ENCODE measurements at regions of chr1 and their contacts with region 1.

Region 1: GRCh38 chr1:107829061-107830040 is 135.6 kb downstream of the VAV3 start:
- DNase-seq: no peak
- ATAC-seq: no peak
- H3K4me3 ChIP-seq: no peak overlapping the region
- H3K27ac ChIP-seq: peak overlapping the region in 2 of 12 donors; percentile 22 to 59
- H3K4me1 ChIP-seq: peaks cover 0 to 50% (median 0%) of the 10 kb centered on the region in 12 donors
- H3K27me3 ChIP-seq: no peaks in the 10 kb centered on the region
- CTCF ChIP-seq: no peak
- POLR2A ChIP-seq: no peak

Region 2: GRCh38 chr1:107782217-107782845 is 47.0 kb before region 1 on chr1:
- intact Hi-C with region 1: loop called in 1 of 10 experiments (anchors 5 kb)
- DNase-seq: peak in 2 of 5 donors; percentile 43
- ATAC-seq: peak in 3 of 4 donors; percentile 36 to 50 (median 49)
- H3K4me3 ChIP-seq: no peak overlapping the region
- H3K27ac ChIP-seq: no peak overlapping the region
- H3K4me1 ChIP-seq: peaks cover 0 to 34% (median 2%) of the 10 kb centered on the region in 12 donors
- H3K27me3 ChIP-seq: no peaks in the 10 kb centered on the region
- CTCF ChIP-seq: peak; percentile 65 to 85 (median 74)
- POLR2A ChIP-seq: no peak

Region 3: GRCh38 chr1:107795994-107796393 is 33.4 kb before region 1 on chr1:
- intact Hi-C with region 1: no loop called
- DNase-seq: peak in 2 of 5 donors; percentile 20 to 29
- ATAC-seq: peak in 3 of 4 donors; percentile 28 to 82 (median 67)
- H3K4me3 ChIP-seq: no peak overlapping the region
- H3K27ac ChIP-seq: no peak overlapping the region
- H3K4me1 ChIP-seq: peaks cover 0 to 7% (median 0%) of the 10 kb centered on the region in 12 donors
- H3K27me3 ChIP-seq: no peaks in the 10 kb centered on the region
- CTCF ChIP-seq: no peak
- POLR2A ChIP-seq: no peak

Region 4: DNA sequence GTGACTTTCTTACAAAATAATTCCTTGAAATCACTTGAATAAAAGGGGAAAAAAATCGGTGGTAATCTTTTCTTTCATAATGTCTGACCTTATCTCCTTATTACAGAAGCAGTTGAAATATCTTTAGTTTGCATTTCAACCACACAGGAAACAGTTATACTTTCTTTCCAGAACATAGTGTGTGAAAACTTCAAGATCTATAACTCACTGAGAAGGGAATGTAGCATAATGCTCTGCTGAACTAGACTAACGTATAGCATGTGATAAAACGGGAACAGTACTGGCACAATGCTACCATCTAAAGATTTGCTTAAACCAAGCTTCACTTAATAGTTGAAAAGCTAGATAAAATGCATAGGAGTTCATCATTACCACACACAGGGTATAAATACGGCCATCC is 90.6 kb after region 1 on chr1:
- intact Hi-C with region 1: loop called in 1 of 10 experiments (anchors 10 kb)
- DNase-seq: no peak
- ATAC-seq: no peak
- H3K4me3 ChIP-seq: no peak overlapping the region
- H3K27ac ChIP-seq: no peak overlapping the region
- H3K4me1 ChIP-seq: peaks cover 0 to 24% (median 0%) of the 10 kb centered on the region in 12 donors
- H3K27me3 ChIP-seq: no peaks in the 10 kb centered on the region
- CTCF ChIP-seq: no peak
- POLR2A ChIP-seq: no peak

Region 5: GRCh38 chr1:107936498-107937481 is 107.4 kb after region 1 on chr1:
- intact Hi-C with region 1: loop called in 1 of 10 experiments (anchors 5 kb)
- DNase-seq: peak in 4 of 5 donors; percentile 33 to 53 (median 38)
- ATAC-seq: peak; percentile 47 to 88 (median 82)
- H3K4me3 ChIP-seq: peak overlapping the region in 1 of 12 donors; percentile 20
- H3K27ac ChIP-seq: peak overlapping the region in 10 of 12 donors; percentile 30 to 70 (median 50)
- H3K4me1 ChIP-seq: peaks cover 0 to 83% (median 12%) of the 10 kb centered on the region in 12 donors
- H3K27me3 ChIP-seq: no peaks in the 10 kb centered on the region
- CTCF ChIP-seq: no peak
- POLR2A ChIP-seq: no peak

Region 6: DNA sequence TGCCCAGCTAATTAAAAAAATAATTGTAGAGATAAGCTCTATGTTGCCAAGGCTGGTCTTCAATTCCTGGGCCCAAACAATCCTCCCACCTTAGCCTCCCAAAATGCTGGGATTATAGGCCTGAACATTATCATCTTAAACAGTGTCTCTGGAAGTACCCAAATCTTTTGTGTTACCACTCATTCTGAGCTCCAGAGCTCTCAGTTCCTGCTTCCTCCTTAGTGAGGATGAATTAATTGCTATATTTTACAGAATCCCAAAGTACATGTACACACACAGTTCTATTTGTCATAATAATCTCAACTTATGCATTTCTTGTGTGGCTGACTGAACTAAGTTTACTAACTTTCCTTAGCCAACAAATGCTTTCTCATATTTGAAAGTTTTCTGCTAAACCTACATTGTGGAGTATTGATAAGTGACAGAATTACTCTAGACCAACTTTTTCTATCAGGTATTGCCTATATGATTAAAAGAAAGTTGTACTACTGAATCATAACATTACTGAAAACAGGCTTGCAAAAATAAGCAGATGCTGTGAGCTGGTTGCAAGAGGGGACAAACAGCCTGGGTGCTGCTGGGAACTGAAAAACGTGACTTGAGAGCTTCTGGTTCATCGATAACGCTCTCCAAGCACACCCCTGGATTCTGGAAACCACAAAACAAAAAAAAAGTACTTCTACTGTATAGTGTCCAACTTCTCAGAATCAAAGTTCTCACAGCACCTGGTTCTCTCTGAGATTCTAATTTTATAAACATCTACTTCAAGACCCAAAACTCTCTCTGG is 120.3 kb after region 1 on chr1:
- intact Hi-C with region 1: loop called in 1 of 10 experiments (anchors 10 kb)
- DNase-seq: no peak
- ATAC-seq: no peak
- H3K4me3 ChIP-seq: no peak overlapping the region
- H3K27ac ChIP-seq: no peak overlapping the region
- H3K4me1 ChIP-seq: peaks cover 0 to 50% (median 12%) of the 10 kb centered on the region in 12 donors
- H3K27me3 ChIP-seq: no peaks in the 10 kb centered on the region
- CTCF ChIP-seq: no peak
- POLR2A ChIP-seq: no peak